Caco-2 (cell line): ENCODE measurements at regions of chr13 and their contacts with region 1.

Region 1: GRCh38 chr13:90968166-90968904 is 379.2 kb upstream of the MIR17HG start:
- DNase-seq: peak in 1 of 2 experiments; percentile 51
- H3K4me3 ChIP-seq: no peak overlapping the region
- H3K4me3 Mint-ChIP-seq: no peak overlapping the region
- H3K27ac Mint-ChIP-seq: no peak overlapping the region
- H3K4me1 ChIP-seq: no peaks in the 10 kb centered on the region
- H3K4me1 Mint-ChIP-seq: no peaks in the 10 kb centered on the region
- H3K27me3 ChIP-seq: no peaks in the 10 kb centered on the region
- H3K27me3 Mint-ChIP-seq: peaks cover 16% of the 10 kb centered on the region
- CTCF ChIP-seq: peak; percentile 44 to 69

Region 2: GRCh38 chr13:90872491-90873025 is 95.8 kb before region 1 on chr13:
- CTCF ChIA-PET with region 1: interaction called, 9 read pairs
- POLR2A ChIA-PET with region 1: no interaction called
- intact Hi-C with region 1: loop called (anchors 1 kb)
- DNase-seq: no peak
- H3K4me3 ChIP-seq: no peak overlapping the region
- H3K4me3 Mint-ChIP-seq: no peak overlapping the region
- H3K27ac Mint-ChIP-seq: no peak overlapping the region
- H3K4me1 ChIP-seq: no peaks in the 10 kb centered on the region
- H3K4me1 Mint-ChIP-seq: peaks cover 1% of the 10 kb centered on the region
- H3K27me3 ChIP-seq: no peaks in the 10 kb centered on the region
- H3K27me3 Mint-ChIP-seq: peaks cover 9% of the 10 kb centered on the region
- CTCF ChIP-seq: no peak

Region 3: GRCh38 chr13:91212231-91212630 is 243.9 kb after region 1 on chr13:
- CTCF ChIA-PET with region 1: no interaction called
- POLR2A ChIA-PET with region 1: no interaction called
- intact Hi-C with region 1: no loop called
- DNase-seq: no peak
- H3K4me3 ChIP-seq: no peak overlapping the region
- H3K4me3 Mint-ChIP-seq: no peak overlapping the region
- H3K27ac Mint-ChIP-seq: no peak overlapping the region
- H3K4me1 ChIP-seq: peaks cover 7% of the 10 kb centered on the region
- H3K4me1 Mint-ChIP-seq: no peaks in the 10 kb centered on the region
- H3K27me3 ChIP-seq: no peaks in the 10 kb centered on the region
- H3K27me3 Mint-ChIP-seq: peaks cover 4% of the 10 kb centered on the region
- CTCF ChIP-seq: no peak